PC-9 (cell line): ENCODE measurements at regions of chr4 and their contacts with region 1.

Region 1: GRCh38 chr4:124940387-124940786 is 227.9 kb upstream of the ANKRD50 start:
- DNase-seq: peak in 1 of 2 experiments; percentile 84
- H3K4me3 ChIP-seq: peak overlapping the region; percentile 26; the same call in 1 of the 2 replicates
- H3K27ac ChIP-seq: peak overlapping the region; percentile 89
- H3K4me1 ChIP-seq: peaks cover 42% of the 10 kb centered on the region
- H3K27me3 ChIP-seq: no peaks in the 10 kb centered on the region
- CTCF ChIP-seq: no peak

Region 2: GRCh38 chr4:124641715-124642381 is 298.5 kb before region 1 on chr4:
- CTCF ChIA-PET with region 1: no interaction called
- POLR2A ChIA-PET with region 1: no interaction called
- intact Hi-C with region 1: loop called (anchors 2 kb)
- DNase-seq: peak; percentile 59 to 90
- H3K4me3 ChIP-seq: no peak overlapping the region
- H3K27ac ChIP-seq: peak overlapping the region; percentile 41
- H3K4me1 ChIP-seq: peaks cover 18% of the 10 kb centered on the region
- H3K27me3 ChIP-seq: no peaks in the 10 kb centered on the region
- CTCF ChIP-seq: no peak

Region 3: DNA sequence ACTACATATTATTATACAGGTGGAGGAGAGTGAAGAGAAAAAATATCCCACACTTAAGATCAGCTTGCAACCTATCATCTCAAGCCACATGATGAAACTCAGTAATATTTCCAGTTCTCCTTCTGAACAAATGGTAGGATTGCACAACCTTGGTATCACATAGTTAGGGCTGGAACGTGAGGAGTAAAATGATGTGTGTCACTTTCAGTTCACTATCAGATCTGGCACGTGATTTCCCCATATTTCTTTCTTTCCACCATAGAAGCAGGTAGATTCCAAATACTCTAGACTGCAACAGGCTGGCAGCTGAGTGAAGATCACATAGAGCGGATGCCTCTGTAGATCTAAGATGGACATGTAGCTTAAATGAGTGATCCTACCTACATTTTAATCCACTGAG is 77.3 kb before region 1 on chr4:
- CTCF ChIA-PET with region 1: no interaction called
- POLR2A ChIA-PET with region 1: no interaction called
- intact Hi-C with region 1: loop called (anchors 5 kb)
- DNase-seq: peak in 1 of 2 experiments; percentile 51
- H3K4me3 ChIP-seq: no peak overlapping the region
- H3K27ac ChIP-seq: no peak overlapping the region
- H3K4me1 ChIP-seq: no peaks in the 10 kb centered on the region
- H3K27me3 ChIP-seq: no peaks in the 10 kb centered on the region
- CTCF ChIP-seq: no peak

Region 4: DNA sequence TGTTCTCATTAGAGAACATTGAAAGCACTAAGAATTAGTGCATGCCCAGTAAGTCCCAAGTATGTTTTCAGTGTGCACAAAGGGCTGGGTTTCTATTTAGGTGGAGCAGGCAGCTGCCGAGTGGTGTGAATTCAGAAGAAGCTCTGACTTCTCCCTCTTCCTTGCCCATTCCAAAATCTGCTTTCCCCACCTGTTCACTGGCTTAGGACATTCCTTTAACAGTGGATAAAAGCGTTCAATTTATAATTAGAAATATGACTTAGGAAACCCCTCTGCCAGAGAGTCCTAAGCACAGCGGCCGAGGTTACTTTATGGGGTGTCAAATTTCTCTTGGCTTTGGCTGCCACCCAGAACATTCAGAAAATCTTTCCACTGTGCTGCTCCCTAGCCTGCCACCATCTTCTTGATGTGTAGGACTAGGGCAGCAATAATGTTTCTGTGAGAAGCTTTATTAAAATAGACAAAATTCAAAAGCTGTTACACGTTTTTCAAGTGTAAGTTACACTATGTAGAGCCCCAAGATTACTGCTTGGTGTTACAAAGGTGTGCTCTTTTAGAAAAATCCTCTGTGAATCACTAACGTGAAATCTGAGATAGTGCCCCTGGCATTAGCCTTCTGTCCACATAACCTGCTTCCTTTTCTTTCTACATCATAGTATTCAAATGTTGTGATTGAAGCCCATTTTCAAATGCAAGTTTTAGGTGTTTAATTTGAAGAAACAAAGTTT is 36.2 kb before region 1 on chr4:
- CTCF ChIA-PET with region 1: no interaction called
- POLR2A ChIA-PET with region 1: no interaction called
- intact Hi-C with region 1: loop called (anchors 2 kb)
- DNase-seq: peak; percentile 54 to 68
- H3K4me3 ChIP-seq: peak overlapping the region; percentile 46
- H3K27ac ChIP-seq: peak overlapping the region; percentile 65
- H3K4me1 ChIP-seq: peaks cover 30% of the 10 kb centered on the region
- H3K27me3 ChIP-seq: no peaks in the 10 kb centered on the region
- CTCF ChIP-seq: no peak

Region 5: GRCh38 chr4:124915073-124915472 is 25.3 kb before region 1 on chr4:
- CTCF ChIA-PET with region 1: no interaction called
- POLR2A ChIA-PET with region 1: no interaction called
- intact Hi-C with region 1: no loop called
- DNase-seq: no peak
- H3K4me3 ChIP-seq: no peak overlapping the region
- H3K27ac ChIP-seq: no peak overlapping the region
- H3K4me1 ChIP-seq: no peaks in the 10 kb centered on the region
- H3K27me3 ChIP-seq: no peaks in the 10 kb centered on the region
- CTCF ChIP-seq: no peak

Region 6: DNA sequence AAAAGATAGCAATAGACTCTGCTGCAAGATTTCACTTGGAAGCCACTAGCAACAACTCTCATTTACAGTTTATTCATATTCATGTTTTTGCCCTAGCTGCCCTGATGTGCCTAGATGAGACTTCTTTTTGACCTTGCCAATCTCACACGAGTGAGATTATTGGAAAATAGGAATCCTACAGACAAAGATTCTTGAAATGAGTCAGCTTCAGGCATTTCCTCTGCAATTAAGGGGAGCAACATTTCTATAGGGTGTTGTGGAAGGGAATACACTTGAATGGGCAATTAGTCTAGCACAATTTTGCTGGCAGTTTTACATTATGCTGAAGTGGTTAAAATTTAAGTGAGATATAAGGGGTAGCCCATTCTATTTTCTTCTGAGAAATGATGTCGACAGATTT is 157.3 kb after region 1 on chr4:
- CTCF ChIA-PET with region 1: no interaction called
- POLR2A ChIA-PET with region 1: no interaction called
- intact Hi-C with region 1: loop called (anchors 10 kb)
- DNase-seq: no peak
- H3K4me3 ChIP-seq: no peak overlapping the region
- H3K27ac ChIP-seq: no peak overlapping the region
- H3K4me1 ChIP-seq: peaks cover 11% of the 10 kb centered on the region
- H3K27me3 ChIP-seq: no peaks in the 10 kb centered on the region
- CTCF ChIP-seq: no peak